Posterior vena cava (tissue), 2 donors: ENCODE measurements at regions of chrX and their contacts with region 1.

Region 1: GRCh38 chrX:2552620-2553201 is 51.9 kb upstream of the DHRSX start:
- DNase-seq: no peak

Region 2: GRCh38 chrX:973010-973632 is 1579.6 kb before region 1 on chrX:
- intact Hi-C with region 1: loop called in 1 of 2 experiments (anchors 10 kb)
- DNase-seq: no peak

Region 3: DNA sequence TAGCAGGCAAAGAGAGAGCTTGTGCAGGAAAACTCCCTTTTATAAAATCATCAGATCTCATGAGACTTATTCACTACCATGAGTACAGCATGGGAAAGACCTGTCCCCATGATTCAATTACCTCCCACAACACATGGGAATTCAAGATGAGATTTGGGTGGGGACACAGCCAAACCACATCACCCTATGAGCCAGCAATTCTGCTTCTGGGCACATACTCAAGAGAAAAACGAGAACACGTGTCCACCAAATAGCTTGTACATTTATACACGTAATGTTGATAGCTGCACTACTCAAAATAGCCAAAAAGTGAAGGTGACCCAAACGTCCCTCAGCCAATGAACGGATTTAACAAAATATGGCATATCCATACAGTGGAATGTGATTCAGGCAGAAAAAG is 42.5 kb after region 1 on chrX:
- intact Hi-C with region 1: no loop called
- DNase-seq: no peak